ENCODE measurements at regions of chr18 and their contacts with region 1.

Region 1: GRCh38 chr18:23586249-23587196 is at the start of gene NPC1:
- DNase-seq: peak; percentile 91 to 94
- H3K4me3 ChIP-seq: peak within 1 kb of the TSS; percentile 80
- H3K4me3 Mint-ChIP-seq: peak within 1 kb of the TSS; percentile 78
- H3K27ac Mint-ChIP-seq: peak within 1 kb of the TSS; percentile 88
- H3K4me1 ChIP-seq: no peaks in the 10 kb centered on the region
- H3K4me1 Mint-ChIP-seq: no peaks in the 10 kb centered on the region
- H3K27me3 ChIP-seq: no peaks in the 10 kb centered on the region
- H3K27me3 Mint-ChIP-seq: no peaks in the 10 kb centered on the region
- CTCF ChIP-seq: peak; percentile 69 to 70
- total RNA-seq, gene NPC1: 29.5 and 32.8 TPM in 2 replicates

Region 2: GRCh38 chr18:23194155-23194996 is 392.1 kb before region 1 on chr18:
- CTCF ChIA-PET with region 1: no interaction called
- POLR2A ChIA-PET with region 1: no interaction called
- intact Hi-C with region 1: no loop called
- DNase-seq: no peak
- H3K4me3 ChIP-seq: no peak overlapping the region
- H3K4me3 Mint-ChIP-seq: no peak overlapping the region
- H3K27ac Mint-ChIP-seq: no peak overlapping the region
- H3K4me1 ChIP-seq: peaks cover 14% of the 10 kb centered on the region; the same call in 1 of the 2 replicates
- H3K4me1 Mint-ChIP-seq: peaks cover 10% of the 10 kb centered on the region
- H3K27me3 ChIP-seq: no peaks in the 10 kb centered on the region
- H3K27me3 Mint-ChIP-seq: no peaks in the 10 kb centered on the region
- CTCF ChIP-seq: no peak

Region 3: DNA sequence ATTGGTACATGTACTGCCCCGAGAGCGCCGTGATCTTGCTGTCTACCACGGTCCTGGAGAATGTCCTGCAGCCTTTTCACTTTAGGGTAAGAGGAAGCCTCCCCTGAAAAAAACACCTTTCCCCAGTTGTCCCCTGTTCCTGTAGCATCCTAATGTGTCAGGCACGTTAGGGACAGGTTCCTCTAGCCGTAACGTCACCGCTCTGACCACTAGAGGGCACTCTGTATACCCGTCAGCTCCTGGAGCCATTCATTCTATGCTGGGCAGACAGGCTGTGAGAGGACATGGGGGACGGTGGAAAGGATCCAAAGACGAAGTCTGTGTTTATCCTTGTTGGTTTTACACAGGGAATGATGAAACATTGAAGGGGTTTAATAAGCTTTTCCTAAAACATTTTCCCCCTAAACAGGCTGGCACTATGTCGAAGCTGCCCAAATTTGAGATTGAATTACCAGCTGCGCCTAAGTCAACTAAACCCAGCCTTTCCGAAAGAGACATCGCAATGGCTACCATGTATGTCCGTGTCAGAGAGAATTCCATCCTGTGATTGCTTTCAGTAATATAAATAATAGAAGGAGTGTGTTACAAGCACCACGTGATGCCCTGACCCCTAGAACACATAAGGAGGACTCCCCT is 70.5 kb before region 1 on chr18:
- CTCF ChIA-PET with region 1: interaction called, 3 read pairs
- POLR2A ChIA-PET with region 1: no interaction called
- intact Hi-C with region 1: loop called (anchors 1 kb)
- DNase-seq: peak; percentile 70 to 72
- H3K4me3 ChIP-seq: no peak overlapping the region
- H3K4me3 Mint-ChIP-seq: no peak overlapping the region
- H3K27ac Mint-ChIP-seq: no peak overlapping the region
- H3K4me1 ChIP-seq: peaks cover 4% of the 10 kb centered on the region; the same call in 1 of the 2 replicates
- H3K4me1 Mint-ChIP-seq: no peaks in the 10 kb centered on the region
- H3K27me3 ChIP-seq: no peaks in the 10 kb centered on the region
- H3K27me3 Mint-ChIP-seq: no peaks in the 10 kb centered on the region
- CTCF ChIP-seq: peak; percentile 51 to 68

Region 4: GRCh38 chr18:23529597-23529996 is 56.9 kb before region 1 on chr18:
- CTCF ChIA-PET with region 1: no interaction called
- POLR2A ChIA-PET with region 1: no interaction called
- intact Hi-C with region 1: no loop called
- DNase-seq: no peak
- H3K4me3 ChIP-seq: no peak overlapping the region
- H3K4me3 Mint-ChIP-seq: no peak overlapping the region
- H3K27ac Mint-ChIP-seq: no peak overlapping the region
- H3K4me1 ChIP-seq: no peaks in the 10 kb centered on the region
- H3K4me1 Mint-ChIP-seq: no peaks in the 10 kb centered on the region
- H3K27me3 ChIP-seq: no peaks in the 10 kb centered on the region
- H3K27me3 Mint-ChIP-seq: no peaks in the 10 kb centered on the region
- CTCF ChIP-seq: no peak

Region 5: GRCh38 chr18:23573626-23574431 is 12.7 kb before region 1 on chr18:
- CTCF ChIA-PET with region 1: no interaction called
- POLR2A ChIA-PET with region 1: no interaction called
- intact Hi-C with region 1: loop called (anchors 2 kb)
- DNase-seq: no peak
- H3K4me3 ChIP-seq: no peak overlapping the region
- H3K4me3 Mint-ChIP-seq: no peak overlapping the region
- H3K27ac Mint-ChIP-seq: no peak overlapping the region
- H3K4me1 ChIP-seq: peaks cover 15% of the 10 kb centered on the region
- H3K4me1 Mint-ChIP-seq: no peaks in the 10 kb centered on the region
- H3K27me3 ChIP-seq: no peaks in the 10 kb centered on the region
- H3K27me3 Mint-ChIP-seq: no peaks in the 10 kb centered on the region
- CTCF ChIP-seq: no peak